Body of pancreas (tissue), 4 donors: ENCODE measurements at regions of chr2 and their contacts with region 1.

Region 1: DNA sequence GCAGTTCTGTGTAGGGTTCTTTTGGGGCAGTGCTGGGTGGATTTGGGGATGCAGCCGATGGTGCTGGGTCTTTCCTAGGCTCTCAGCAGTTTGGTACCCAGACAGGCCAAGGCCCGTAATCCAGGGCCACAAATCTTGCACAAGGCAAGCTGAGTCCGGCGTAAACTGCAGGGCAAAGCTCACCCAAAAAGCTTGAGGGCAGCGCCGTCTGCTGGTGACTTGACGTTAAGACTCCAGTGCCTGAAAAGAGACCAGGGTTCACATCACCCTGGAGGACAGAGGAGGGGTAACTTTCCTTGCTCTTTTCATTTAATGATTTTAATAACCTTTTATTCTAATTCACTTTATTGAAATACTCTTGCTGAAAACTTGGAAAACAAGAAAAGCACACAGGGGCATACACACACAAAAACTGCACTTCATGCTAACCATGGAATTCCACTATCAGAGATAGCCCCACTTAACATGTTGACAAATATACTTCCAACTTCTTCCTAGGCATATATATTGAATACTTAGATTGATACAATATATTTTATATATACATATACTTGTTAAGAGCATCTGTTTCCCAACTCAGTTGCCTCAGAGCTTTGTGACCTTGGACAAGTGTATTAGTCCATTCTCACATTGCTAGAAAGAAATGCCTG is 38.9 kb downstream of the CNGA3 start:
- DNase-seq: peak; percentile 71 to 79 (median 74)
- ATAC-seq: peak; percentile 81
- H3K4me3 ChIP-seq: no peak overlapping the region
- H3K27ac ChIP-seq: no peak overlapping the region
- H3K4me1 ChIP-seq: no peaks in the 10 kb centered on the region
- H3K27me3 ChIP-seq: no peaks in the 10 kb centered on the region
- CTCF ChIP-seq: peak; percentile 68 to 97 (median 91)
- POLR2A ChIP-seq: no peak

Region 2: GRCh38 chr2:97730245-97730644 is 654.9 kb before region 1 on chr2:
- intact Hi-C with region 1: loop called (anchors 10 kb)
- DNase-seq: no peak
- ATAC-seq: no peak
- H3K4me3 ChIP-seq: no peak overlapping the region
- H3K27ac ChIP-seq: no peak overlapping the region
- H3K4me1 ChIP-seq: no peaks in the 10 kb centered on the region
- H3K27me3 ChIP-seq: no peaks in the 10 kb centered on the region
- CTCF ChIP-seq: no peak
- POLR2A ChIP-seq: no peak